Thyroid gland (tissue), 4 donors: ENCODE measurements at regions of chr7 and their contacts with region 1.

Region 1: GRCh38 chr7:25389489-25390106 is 161.3 kb upstream of the NPVF start:
- DNase-seq: peak in 1 of 2 donors; percentile 26
- H3K4me3 ChIP-seq: no peak overlapping the region
- H3K27ac ChIP-seq: no peak overlapping the region
- H3K4me1 ChIP-seq: peaks cover 10 to 19% of the 10 kb centered on the region in 2 donors
- H3K27me3 ChIP-seq: no peaks in the 10 kb centered on the region
- CTCF ChIP-seq: peak in 4 of 6 experiments; percentile 39 to 94 (median 68)
- POLR2A ChIP-seq: no peak

Region 2: GRCh38 chr7:25259587-25260243 is 129.9 kb before region 1 on chr7:
- intact Hi-C with region 1: loop called (anchors 2 kb)
- DNase-seq: peak; percentile 69 to 76
- H3K4me3 ChIP-seq: no peak overlapping the region
- H3K27ac ChIP-seq: no peak overlapping the region
- H3K4me1 ChIP-seq: no peaks in the 10 kb centered on the region
- H3K27me3 ChIP-seq: no peaks in the 10 kb centered on the region
- CTCF ChIP-seq: peak; percentile 42 to 97 (median 84)
- POLR2A ChIP-seq: no peak

Region 3: DNA sequence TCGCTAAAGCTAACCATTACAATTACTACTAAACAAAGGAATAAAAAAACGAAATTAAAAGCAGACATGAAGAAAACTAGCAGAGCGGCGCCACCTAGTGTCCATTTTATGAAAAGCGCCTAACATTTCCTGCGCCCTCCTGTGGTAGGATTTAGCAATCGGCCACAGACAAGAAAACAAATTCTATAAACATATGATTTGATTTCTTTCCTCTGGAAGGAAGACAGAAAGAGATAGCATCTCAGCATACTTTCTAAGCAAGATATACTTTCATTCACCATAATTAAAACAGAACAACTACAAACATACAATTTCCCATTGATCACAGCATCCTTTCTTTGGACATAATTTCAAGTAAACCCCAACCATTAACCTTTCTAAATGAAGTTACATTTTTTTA is 176.4 kb after region 1 on chr7:
- intact Hi-C with region 1: loop called (anchors 2 kb)
- DNase-seq: peak; percentile 48 to 66
- H3K4me3 ChIP-seq: no peak overlapping the region
- H3K27ac ChIP-seq: no peak overlapping the region
- H3K4me1 ChIP-seq: no peaks in the 10 kb centered on the region
- H3K27me3 ChIP-seq: no peaks in the 10 kb centered on the region
- CTCF ChIP-seq: peak; percentile 98 to 100 (median 99)
- POLR2A ChIP-seq: no peak